Activated naive CD4-positive, alpha-beta T cell treated with anti-CD3 and anti-CD28 coated beads for 36 hours (primary cell): ENCODE measurements at regions of chr2 and their contacts with region 1.

Region 1: GRCh38 chr2:216206041-216206703 is 97.0 kb downstream of the XRCC5 start:
- DNase-seq: no peak
- H3K4me3 Mint-ChIP-seq: no peak overlapping the region
- H3K27ac Mint-ChIP-seq: peak overlapping the region; percentile 93
- H3K4me1 Mint-ChIP-seq: peaks cover 77% of the 10 kb centered on the region
- H3K27me3 Mint-ChIP-seq: no peaks in the 10 kb centered on the region

Region 2: GRCh38 chr2:216119986-216120385 is 86.2 kb before region 1 on chr2:
- CTCF ChIA-PET with region 1: no interaction called
- intact Hi-C with region 1: loop called (anchors 1 kb)
- DNase-seq: peak; percentile 31
- H3K4me3 Mint-ChIP-seq: peak overlapping the region; percentile 33
- H3K27ac Mint-ChIP-seq: peak overlapping the region; percentile 95
- H3K4me1 Mint-ChIP-seq: peaks cover 79% of the 10 kb centered on the region
- H3K27me3 Mint-ChIP-seq: no peaks in the 10 kb centered on the region

Region 3: GRCh38 chr2:216183462-216183861 is 22.7 kb before region 1 on chr2:
- CTCF ChIA-PET with region 1: no interaction called
- intact Hi-C with region 1: no loop called
- DNase-seq: no peak
- H3K4me3 Mint-ChIP-seq: no peak overlapping the region
- H3K27ac Mint-ChIP-seq: no peak overlapping the region
- H3K4me1 Mint-ChIP-seq: peaks cover 70% of the 10 kb centered on the region
- H3K27me3 Mint-ChIP-seq: no peaks in the 10 kb centered on the region

Region 4: GRCh38 chr2:216216951-216217903 is 11.1 kb after region 1 on chr2:
- CTCF ChIA-PET with region 1: no interaction called
- intact Hi-C with region 1: loop called (anchors 1 kb)
- DNase-seq: peak; percentile 47
- H3K4me3 Mint-ChIP-seq: no peak overlapping the region
- H3K27ac Mint-ChIP-seq: peak overlapping the region; percentile 37
- H3K4me1 Mint-ChIP-seq: peaks cover 28% of the 10 kb centered on the region
- H3K27me3 Mint-ChIP-seq: no peaks in the 10 kb centered on the region

Region 5: DNA sequence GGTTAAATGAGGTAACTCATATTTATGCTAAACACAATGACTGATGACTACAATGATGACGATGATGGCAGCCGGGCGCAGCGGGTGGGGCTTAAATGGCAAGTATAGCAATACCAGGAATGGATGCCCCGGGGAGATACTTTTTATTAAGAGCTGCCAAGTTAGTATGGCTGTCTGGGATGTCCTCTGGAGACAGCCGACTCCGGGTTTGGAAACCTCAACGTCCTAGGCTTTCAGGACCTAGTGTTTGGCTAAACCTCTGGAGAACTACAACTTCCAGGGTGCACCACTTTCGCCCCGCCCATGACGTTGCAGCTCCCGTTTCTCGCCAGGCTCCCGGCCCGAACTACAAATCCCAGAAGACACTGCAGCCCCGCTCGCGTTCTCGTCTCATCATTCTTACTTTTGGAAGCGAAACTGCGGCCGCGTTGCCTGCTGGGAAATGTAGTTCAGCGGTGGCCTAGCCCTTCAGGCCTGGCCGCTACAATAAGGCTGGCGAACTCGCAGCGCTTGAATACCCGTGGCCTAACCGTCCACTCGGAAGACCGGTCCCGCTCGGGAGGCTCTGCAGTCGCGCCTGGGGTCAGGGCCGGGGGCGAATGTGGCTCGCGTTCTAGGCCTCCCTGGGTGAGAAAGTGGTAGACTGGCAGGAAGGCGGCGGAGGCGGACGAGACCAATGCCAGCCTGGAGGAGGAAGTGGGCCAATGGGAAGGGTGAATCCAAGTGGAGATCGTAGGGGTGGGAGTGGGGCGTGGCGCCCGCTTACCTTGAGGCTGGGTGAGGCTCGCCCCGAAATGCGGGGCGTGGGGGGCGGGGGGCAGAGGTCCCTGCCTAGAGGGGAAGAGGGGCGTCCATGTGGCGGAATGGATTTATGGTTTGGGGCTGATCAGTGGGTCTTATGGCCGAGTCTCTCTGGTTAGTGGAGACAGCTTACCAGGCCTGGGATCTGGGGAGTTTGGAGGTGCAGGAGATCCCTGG is 206.1 kb after region 1 on chr2 and contains the start of gene SMARCAL1:
- CTCF ChIA-PET with region 1: interaction called, 3 read pairs
- intact Hi-C with region 1: loop called (anchors 1 kb)
- DNase-seq: peak; percentile 100
- H3K4me3 Mint-ChIP-seq: peak within 1 kb of the TSS; percentile 92
- H3K27ac Mint-ChIP-seq: peak within 1 kb of the TSS; percentile 90
- H3K4me1 Mint-ChIP-seq: peaks cover 6% of the 10 kb centered on the region
- H3K27me3 Mint-ChIP-seq: no peaks in the 10 kb centered on the region
- total RNA-seq, gene SMARCAL1: 17.0 to 18.2 TPM

Region 6: GRCh38 chr2:216498418-216499413 is 292.5 kb after region 1 on chr2 and contains the start of gene RPL37A:
- CTCF ChIA-PET with region 1: no interaction called
- intact Hi-C with region 1: loop called (anchors 1 kb)
- DNase-seq: peak; percentile 93
- H3K4me3 Mint-ChIP-seq: peak within 1 kb of the TSS; percentile 94
- H3K27ac Mint-ChIP-seq: peak within 1 kb of the TSS; percentile 94
- H3K4me1 Mint-ChIP-seq: peaks cover 51% of the 10 kb centered on the region
- H3K27me3 Mint-ChIP-seq: no peaks in the 10 kb centered on the region
- total RNA-seq, gene RPL37A: 4,869 to 4,871 TPM

Region 7: DNA sequence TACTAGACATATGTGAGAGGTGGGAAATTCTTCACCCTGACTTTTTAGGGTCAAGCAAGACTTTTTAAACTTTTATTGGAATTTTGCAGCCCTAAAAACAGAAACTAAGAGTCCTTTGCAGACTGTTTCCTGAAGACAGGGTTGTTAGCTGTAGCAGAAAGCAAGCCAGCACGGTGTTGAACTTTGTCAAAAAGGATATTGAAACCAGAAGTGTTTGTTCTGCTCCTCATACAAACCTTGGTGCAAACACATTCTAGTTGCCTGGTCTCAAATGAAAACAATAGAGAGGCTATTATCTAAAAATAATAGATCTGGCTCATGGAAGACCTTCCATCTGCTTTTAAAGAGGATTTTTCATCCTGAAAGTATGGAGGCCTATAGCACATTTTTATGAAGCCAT is 555.0 kb after region 1 on chr2:
- CTCF ChIA-PET with region 1: no interaction called
- intact Hi-C with region 1: no loop called
- DNase-seq: no peak
- H3K4me3 Mint-ChIP-seq: no peak overlapping the region
- H3K27ac Mint-ChIP-seq: no peak overlapping the region
- H3K4me1 Mint-ChIP-seq: no peaks in the 10 kb centered on the region
- H3K27me3 Mint-ChIP-seq: peaks cover 7% of the 10 kb centered on the region

Region 8: DNA sequence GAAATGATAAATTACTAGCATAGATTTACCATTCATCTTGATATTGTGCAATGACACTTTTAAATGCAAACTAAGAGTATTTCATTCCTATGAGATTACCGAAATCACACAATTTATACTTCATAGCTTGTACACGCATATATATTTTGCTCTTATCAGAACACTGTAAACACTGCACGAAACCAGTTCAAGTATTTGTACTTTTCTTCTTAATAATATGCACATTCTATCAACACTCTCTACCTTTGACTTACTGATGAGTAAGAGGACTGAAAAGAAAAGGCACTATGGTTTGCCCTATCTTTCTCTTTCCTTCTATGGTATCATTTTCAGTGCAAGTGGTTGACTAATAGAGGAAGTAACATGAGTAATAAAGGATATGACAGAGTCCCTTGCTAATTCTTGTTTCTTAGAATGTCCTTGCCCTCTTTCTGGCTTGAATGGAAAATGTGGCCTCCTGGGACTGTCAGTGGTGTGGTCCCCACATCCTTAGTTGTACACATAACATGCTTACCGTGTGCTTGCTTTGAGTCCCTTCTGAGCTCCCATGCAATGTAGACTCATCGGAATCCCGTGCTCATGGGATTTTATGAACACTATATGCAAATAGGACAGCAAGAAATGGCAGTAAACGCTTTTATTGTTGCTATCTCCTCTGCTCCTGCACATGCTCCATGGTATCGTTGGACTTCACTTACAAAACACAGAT is 1017.2 kb after region 1 on chr2:
- CTCF ChIA-PET with region 1: no interaction called
- intact Hi-C with region 1: loop called (anchors 1 kb)
- DNase-seq: peak; percentile 78
- H3K4me3 Mint-ChIP-seq: no peak overlapping the region
- H3K27ac Mint-ChIP-seq: peak overlapping the region; percentile 59
- H3K4me1 Mint-ChIP-seq: peaks cover 29% of the 10 kb centered on the region
- H3K27me3 Mint-ChIP-seq: peaks cover 28% of the 10 kb centered on the region